ENCODE measurements at regions of chr16 and their contacts with region 1.

Region 1: DNA sequence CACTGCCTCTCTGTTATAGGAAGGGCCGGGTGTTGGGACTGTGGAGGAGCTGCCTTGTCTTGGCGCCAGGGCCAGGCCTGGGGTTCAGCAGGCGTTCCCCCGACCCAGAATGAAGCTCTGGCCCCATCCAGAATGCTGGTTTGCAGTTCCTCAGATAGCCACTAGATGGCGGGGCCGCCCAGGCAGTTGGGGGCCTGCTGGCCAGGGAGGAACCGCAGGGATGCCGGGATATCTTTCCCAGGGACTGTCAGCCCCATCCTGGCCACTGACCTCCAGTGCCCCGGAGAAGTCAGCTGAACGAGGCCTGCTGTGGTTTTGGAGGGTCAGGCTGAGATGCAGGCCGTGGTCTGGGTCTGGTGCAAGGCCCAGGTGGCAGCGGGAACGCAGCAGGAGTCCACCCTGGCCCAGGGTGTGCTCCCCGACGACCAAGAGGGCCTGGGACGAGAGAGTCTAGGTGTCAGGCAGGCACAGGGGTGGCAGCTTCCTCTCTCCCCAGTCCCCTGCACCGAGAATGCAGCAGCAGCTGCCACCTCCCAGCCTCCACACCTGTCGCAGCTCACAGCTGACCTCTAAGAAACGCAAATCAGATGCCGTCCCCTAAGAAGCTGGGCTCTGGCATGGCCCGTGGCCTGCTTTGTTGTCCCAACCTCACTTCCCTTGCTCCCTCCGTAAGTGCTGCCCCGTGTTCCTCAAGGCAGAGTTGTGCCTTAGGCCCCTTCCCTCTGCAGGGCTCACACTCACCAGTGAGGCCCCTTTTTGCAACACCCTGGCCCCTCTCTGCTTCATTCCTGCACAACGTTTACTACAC is 51.2 kb downstream of the RMI2 start:
- DNase-seq: peak; percentile 66 to 86 (median 78)
- H3K4me3 ChIP-seq: no peak overlapping the region
- H3K27ac ChIP-seq: peak overlapping the region in 2 of 59 donors; percentile 36 to 50
- H3K27me3 ChIP-seq: no peaks in the 10 kb centered on the region
- CTCF ChIP-seq: peak; percentile 92 to 100 (median 99)

Region 2: GRCh38 chr16:10981697-10982216 is 414.7 kb before region 1 on chr16:
- intact Hi-C with region 1: no loop called
- DNase-seq: no peak
- H3K4me3 ChIP-seq: no peak overlapping the region
- H3K27ac ChIP-seq: no peak overlapping the region
- H3K27me3 ChIP-seq: no peaks in the 10 kb centered on the region
- CTCF ChIP-seq: peak in 18 of 56 donors; percentile 6 to 41 (median 24)

Region 3: GRCh38 chr16:11604783-11605558 is 208.5 kb after region 1 on chr16:
- intact Hi-C with region 1: no loop called
- DNase-seq: no peak
- H3K4me3 ChIP-seq: no peak overlapping the region
- H3K27ac ChIP-seq: peak overlapping the region in 1 of 59 donors; percentile 22
- H3K27me3 ChIP-seq: peaks cover 0 to 7% (median 0%) of the 10 kb centered on the region in 45 donors
- CTCF ChIP-seq: no peak

Region 4: GRCh38 chr16:11639925-11640899 is 243.8 kb after region 1 on chr16:
- intact Hi-C with region 1: loop called (anchors 5 kb)
- DNase-seq: peak in 9 of 10 donors; percentile 23 to 77 (median 55)
- H3K4me3 ChIP-seq: peak overlapping the region in 1 of 59 donors; percentile 1
- H3K27ac ChIP-seq: peak overlapping the region in 58 of 59 donors; percentile 24 to 91 (median 84)
- H3K27me3 ChIP-seq: no peaks in the 10 kb centered on the region
- CTCF ChIP-seq: peak in 1 of 56 donors; percentile 19

Region 5: DNA sequence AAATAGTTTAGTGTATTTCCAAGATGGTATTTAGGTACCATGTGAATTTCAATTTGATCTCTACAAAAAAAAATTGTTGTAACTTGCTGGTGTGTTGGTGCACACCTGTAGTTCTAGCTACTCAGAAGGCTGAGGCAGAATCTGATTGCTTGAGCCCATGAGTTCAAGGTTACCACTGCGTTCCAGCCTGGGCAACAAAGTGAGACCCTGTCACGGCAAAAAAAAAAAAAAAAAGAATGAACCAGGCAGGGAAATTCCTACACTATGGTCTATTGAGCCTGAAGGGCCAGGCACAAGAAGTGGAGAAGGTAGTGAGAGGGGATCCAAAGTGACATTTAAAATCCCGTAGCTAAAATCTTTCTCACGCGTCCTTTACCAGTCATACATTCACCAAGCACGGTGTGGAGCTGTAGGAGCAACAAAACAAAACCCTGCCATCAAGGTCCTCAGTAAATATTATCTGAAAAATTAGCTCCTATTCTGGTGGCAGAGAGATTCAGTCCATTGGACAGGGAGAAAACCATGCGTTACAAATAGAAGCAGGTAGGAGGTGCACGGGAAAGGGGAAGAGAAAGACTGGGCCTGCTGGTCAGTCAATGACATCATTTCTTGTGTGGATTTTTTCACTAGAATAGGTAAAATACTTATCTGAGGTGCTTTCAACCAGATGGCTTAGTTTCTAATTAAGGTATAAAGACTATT is 319.0 kb after region 1 on chr16:
- intact Hi-C with region 1: loop called (anchors 2 to 5 kb)
- DNase-seq: no peak
- H3K4me3 ChIP-seq: no peak overlapping the region
- H3K27ac ChIP-seq: peak overlapping the region in 3 of 59 donors; percentile 11 to 66 (median 22)
- H3K27me3 ChIP-seq: no peaks in the 10 kb centered on the region
- CTCF ChIP-seq: no peak

Region 6: GRCh38 chr16:11806721-11807120 is 410.3 kb after region 1 on chr16:
- intact Hi-C with region 1: loop called in 1 of 2 experiments (anchors 5 kb)
- DNase-seq: no peak
- H3K4me3 ChIP-seq: no peak overlapping the region
- H3K27ac ChIP-seq: no peak overlapping the region
- H3K27me3 ChIP-seq: no peaks in the 10 kb centered on the region
- CTCF ChIP-seq: no peak

Region 7: GRCh38 chr16:11819798-11820197 is 423.4 kb after region 1 on chr16:
- intact Hi-C with region 1: loop called (anchors 5 kb)
- DNase-seq: no peak
- H3K4me3 ChIP-seq: no peak overlapping the region
- H3K27ac ChIP-seq: no peak overlapping the region
- H3K27me3 ChIP-seq: no peaks in the 10 kb centered on the region
- CTCF ChIP-seq: no peak

Region 8: DNA sequence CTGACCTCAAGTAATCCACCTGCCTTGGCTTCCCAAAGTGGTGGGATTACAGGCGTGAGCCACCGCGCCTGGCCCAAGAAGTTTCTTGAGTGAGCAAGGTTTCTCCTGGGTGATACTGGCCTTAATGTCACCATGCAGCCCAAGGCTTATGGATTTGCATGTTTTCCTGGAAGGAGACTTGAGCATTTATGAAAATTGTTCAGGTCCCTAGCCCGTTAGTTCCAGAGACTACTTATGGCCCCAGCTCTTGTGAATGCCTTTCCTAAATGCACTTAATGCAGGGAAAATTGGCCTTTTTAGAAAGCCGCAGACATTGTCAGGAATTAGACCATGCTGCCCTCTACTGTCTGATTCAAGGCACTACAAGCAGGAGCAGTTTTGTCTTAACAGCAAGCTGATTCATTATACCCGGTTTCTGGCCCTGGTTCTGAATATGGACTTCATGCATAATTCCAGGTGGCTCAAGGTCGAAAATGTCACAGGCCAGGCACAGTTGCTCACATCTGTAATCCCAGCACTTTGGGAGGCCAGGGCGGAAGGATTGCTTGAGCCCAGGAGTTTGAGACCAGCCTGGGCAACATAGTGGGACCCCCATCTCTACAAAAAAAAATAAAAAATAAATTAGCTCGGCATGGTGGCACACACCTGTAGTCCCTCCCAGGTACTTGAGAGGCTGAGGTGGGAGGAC is 671.4 kb after region 1 on chr16:
- intact Hi-C with region 1: loop called in 1 of 2 experiments (anchors 5 kb)
- DNase-seq: peak in 6 of 10 donors; percentile 19 to 79 (median 64)
- H3K4me3 ChIP-seq: no peak overlapping the region
- H3K27ac ChIP-seq: peak overlapping the region in 6 of 59 donors; percentile 3 to 40 (median 28)
- H3K27me3 ChIP-seq: no peaks in the 10 kb centered on the region
- CTCF ChIP-seq: peak; percentile 69 to 99 (median 95)